ENCODE measurements at regions of chr16 and their contacts with region 1.

Region 1: DNA sequence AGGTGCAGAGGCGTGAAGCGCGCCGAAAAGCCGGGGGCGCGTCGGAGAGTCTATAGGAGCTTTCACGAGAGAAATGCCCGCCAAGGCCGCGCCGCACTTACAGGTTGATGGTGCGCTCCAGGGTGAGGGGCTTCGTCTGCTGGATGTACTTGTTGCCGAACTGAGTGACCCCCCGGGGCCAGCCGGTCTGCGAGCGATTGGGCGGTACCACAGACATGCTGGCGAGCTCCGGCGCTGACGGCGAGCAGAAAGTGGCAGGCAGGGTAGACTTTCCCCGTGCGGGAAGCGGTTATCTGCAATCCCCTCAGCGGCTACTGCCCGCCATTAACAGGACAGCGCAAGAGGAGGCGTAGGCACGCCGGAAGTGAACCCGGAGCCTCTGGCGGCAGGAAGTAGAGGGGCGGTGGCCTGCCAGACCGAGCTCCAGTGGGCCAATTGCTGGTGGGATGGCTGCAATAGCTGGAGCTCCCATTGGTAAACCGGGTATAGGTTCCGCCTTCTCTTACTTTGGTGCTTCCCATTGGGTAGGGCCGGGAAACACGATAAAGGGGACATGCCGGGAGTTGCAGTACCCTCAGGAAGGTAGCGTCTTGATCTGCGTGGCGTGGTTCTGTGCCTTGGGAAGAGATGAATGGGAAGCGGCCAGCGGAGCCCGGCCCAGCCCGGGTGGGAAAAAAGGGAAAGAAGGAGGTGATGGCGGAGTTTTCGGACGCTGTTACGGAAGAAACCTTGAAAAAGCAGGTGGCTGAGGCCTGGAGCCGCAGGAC is at the starts of genes NUDT21 and OGFOD1:
- DNase-seq: peak; percentile 73
- ATAC-seq: peak; percentile 99
- H3K4me3 Mint-ChIP-seq: peak within 1 kb of the TSS; percentile 99
- H3K27ac Mint-ChIP-seq: peak within 1 kb of the TSS; percentile 97
- H3K4me1 Mint-ChIP-seq: peaks cover 41% of the 10 kb centered on the region
- H3K27me3 Mint-ChIP-seq: no peaks in the 10 kb centered on the region
- CTCF ChIP-seq: no peak
- total RNA-seq, gene NUDT21: 108 and 111 TPM in 2 replicates
- total RNA-seq, gene OGFOD1: 45.6 and 51.8 TPM in 2 replicates

Region 2: GRCh38 chr16:56401482-56401881 is 49.7 kb before region 1 on chr16:
- CTCF ChIA-PET with region 1: interaction called, 5 read pairs
- POLR2A ChIA-PET with region 1: interaction called, 9 read pairs
- intact Hi-C with region 1: loop called (anchors 1 kb)
- DNase-seq: no peak
- ATAC-seq: peak; percentile 70
- H3K4me3 Mint-ChIP-seq: no peak overlapping the region
- H3K27ac Mint-ChIP-seq: peak overlapping the region; percentile 21
- H3K4me1 Mint-ChIP-seq: peaks cover 2% of the 10 kb centered on the region
- H3K27me3 Mint-ChIP-seq: no peaks in the 10 kb centered on the region
- CTCF ChIP-seq: no peak

Region 3: GRCh38 chr16:56558024-56558747 is 107.0 kb after region 1 on chr16:
- CTCF ChIA-PET with region 1: no interaction called
- POLR2A ChIA-PET with region 1: no interaction called
- intact Hi-C with region 1: no loop called
- DNase-seq: no peak
- ATAC-seq: no peak
- H3K4me3 Mint-ChIP-seq: no peak overlapping the region
- H3K27ac Mint-ChIP-seq: no peak overlapping the region
- H3K4me1 Mint-ChIP-seq: no peaks in the 10 kb centered on the region
- H3K27me3 Mint-ChIP-seq: peaks cover 28% of the 10 kb centered on the region
- CTCF ChIP-seq: no peak